AG04450 (cell line): ENCODE measurements at regions of chr1 and their contacts with region 1.

Region 1: GRCh38 chr1:38834937-38835827 is 24.4 kb downstream of the RRAGC start:
- DNase-seq: peak; percentile 68
- H3K4me3 ChIP-seq: no peak overlapping the region
- H3K27ac ChIP-seq: no peak overlapping the region
- H3K27me3 ChIP-seq: peaks cover 10% of the 10 kb centered on the region
- CTCF ChIP-seq: peak; percentile 83

Region 2: DNA sequence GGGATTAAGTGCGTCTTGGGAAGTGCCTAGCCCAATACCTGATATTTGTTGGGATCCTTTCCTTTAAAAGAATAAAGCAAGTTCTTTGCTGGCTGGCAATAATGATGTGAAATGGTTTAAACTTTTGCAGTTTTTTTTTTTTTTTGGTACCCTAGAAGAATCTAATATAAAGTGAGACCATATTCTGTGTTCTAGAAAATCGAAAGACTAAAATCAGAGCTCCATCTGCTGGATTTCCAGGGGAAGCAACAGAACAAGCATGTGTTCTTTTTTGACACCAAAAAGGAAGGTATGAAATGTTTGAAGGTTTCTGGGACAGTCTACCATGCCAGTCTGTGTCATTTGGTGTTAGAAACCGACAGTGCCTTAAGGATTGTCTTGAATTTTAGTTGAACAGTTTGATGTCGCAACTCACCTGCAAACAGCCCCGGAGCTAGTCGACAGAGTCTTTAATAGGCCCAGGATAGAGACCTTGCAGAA is 816.3 kb before region 1 on chr1:
- CTCF ChIA-PET with region 1: interaction called, 10 read pairs
- POLR2A ChIA-PET with region 1: no interaction called
- DNase-seq: no peak
- H3K4me3 ChIP-seq: no peak overlapping the region
- H3K27ac ChIP-seq: no peak overlapping the region
- H3K27me3 ChIP-seq: no peaks in the 10 kb centered on the region
- CTCF ChIP-seq: peak; percentile 73

Region 3: DNA sequence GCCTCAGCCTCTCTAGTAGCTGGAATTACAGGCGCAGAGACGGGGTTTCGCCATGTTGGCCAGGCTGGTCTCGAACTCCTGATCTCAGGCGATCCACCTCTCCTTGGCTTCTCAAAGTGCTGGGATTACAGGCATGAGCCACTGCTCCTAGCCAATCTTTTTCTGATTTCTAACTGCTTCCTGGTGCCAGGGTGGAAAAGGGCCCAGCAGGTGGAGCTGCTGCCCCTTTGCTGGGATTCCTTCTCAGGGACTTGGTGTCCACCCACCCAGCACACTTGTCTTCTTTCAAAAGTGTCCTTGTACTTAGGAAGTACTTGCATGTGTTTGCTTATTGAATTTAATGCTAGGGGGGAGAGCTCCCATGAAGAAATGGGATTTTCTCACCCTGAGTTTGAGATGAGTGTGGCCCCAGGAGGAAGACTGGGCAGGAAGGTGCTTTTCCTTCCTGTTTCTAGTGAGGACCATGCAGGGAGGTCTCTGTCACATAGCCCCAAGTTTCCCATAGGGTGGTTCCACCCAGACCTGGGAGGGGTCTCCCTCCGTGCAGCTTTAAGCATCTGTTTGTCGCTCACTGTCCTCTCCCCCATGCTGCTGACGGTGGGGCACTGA is 808.5 kb before region 1 on chr1:
- CTCF ChIA-PET with region 1: interaction called, 22 read pairs
- POLR2A ChIA-PET with region 1: interaction called, 4 read pairs
- DNase-seq: no peak
- H3K4me3 ChIP-seq: no peak overlapping the region
- H3K27ac ChIP-seq: no peak overlapping the region
- H3K27me3 ChIP-seq: no peaks in the 10 kb centered on the region
- CTCF ChIP-seq: peak; percentile 78

Region 4: GRCh38 chr1:38818175-38818976 is 16.8 kb before region 1 on chr1:
- CTCF ChIA-PET with region 1: interaction called, 14 read pairs
- POLR2A ChIA-PET with region 1: no interaction called
- DNase-seq: no peak
- H3K4me3 ChIP-seq: 0 out of 2 replicates have a peak overlapping the region, but pooled peaks have one; percentile 4
- H3K27ac ChIP-seq: no peak overlapping the region
- H3K27me3 ChIP-seq: peaks cover 72% of the 10 kb centered on the region
- CTCF ChIP-seq: peak; percentile 46; the same call in 1 of the 2 replicates

Region 5: DNA sequence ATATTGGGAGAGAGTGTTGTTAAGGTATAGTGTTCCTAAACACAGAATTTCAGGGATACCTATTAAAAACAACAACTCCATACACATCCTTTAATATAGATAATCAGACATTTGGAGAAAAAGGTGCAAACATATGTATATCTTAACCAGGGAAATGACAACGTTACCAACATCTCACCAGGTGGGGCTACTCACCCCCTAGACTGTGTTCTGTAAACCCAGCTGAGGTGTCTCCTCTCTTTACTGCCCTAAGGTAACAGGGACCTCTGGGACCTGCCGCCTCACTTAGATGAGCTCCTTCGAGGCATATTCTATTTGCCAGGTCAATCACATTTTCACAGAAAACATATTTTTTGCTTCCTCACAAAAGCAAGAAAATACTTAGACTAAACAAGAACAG is 11.0 kb after region 1 on chr1:
- CTCF ChIA-PET with region 1: interaction called, 17 read pairs
- POLR2A ChIA-PET with region 1: no interaction called
- DNase-seq: no peak
- H3K4me3 ChIP-seq: no peak overlapping the region
- H3K27ac ChIP-seq: no peak overlapping the region
- H3K27me3 ChIP-seq: no peaks in the 10 kb centered on the region
- CTCF ChIP-seq: no peak